Endothelial cell of umbilical vein (primary cell): ENCODE measurements at regions of chr10 and their contacts with region 1.

Region 1: GRCh38 chr10:31697271-31698180 is 231.1 kb downstream of the ARHGAP12 start:
- DNase-seq: peak; percentile 98
- H3K4me3 ChIP-seq: peak overlapping the region in 1 of 3 experiments; percentile 24
- H3K27ac ChIP-seq: peak overlapping the region; percentile 90
- H3K4me1 ChIP-seq: peaks cover 57% of the 10 kb centered on the region
- H3K27me3 ChIP-seq: no peaks in the 10 kb centered on the region
- CTCF ChIP-seq: no peak
- POLR2A ChIP-seq: peak; percentile 75

Region 2: DNA sequence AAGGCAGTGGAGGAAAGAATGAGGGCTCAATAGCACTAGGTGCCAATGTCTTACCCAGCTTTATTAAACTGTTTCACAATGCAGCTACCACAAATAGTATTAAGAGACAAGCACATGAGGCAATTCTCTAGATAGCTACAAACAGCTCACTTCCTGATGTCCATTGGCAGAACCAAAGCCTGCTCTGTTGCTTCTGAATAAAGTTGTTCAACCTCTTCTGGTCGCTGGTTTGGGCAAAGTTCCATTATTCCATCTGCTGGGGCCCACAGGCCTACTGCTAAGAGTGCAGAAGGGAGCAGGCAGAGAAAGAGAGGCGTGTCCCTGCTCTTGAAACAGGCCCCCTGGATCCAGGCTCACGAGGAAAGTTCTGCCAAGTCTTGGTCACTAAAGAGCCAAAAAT is 839.7 kb before region 1 on chr10:
- CTCF ChIA-PET with region 1: no interaction called
- POLR2A ChIA-PET with region 1: no interaction called
- dilution Hi-C with region 1: no loop called
- intact Hi-C with region 1: loop called (anchors 2 kb)
- DNase-seq: peak; percentile 50
- H3K4me3 ChIP-seq: no peak overlapping the region
- H3K27ac ChIP-seq: peak overlapping the region; percentile 97
- H3K4me1 ChIP-seq: peaks cover 63% of the 10 kb centered on the region
- H3K27me3 ChIP-seq: no peaks in the 10 kb centered on the region
- CTCF ChIP-seq: no peak
- POLR2A ChIP-seq: no peak

Region 3: DNA sequence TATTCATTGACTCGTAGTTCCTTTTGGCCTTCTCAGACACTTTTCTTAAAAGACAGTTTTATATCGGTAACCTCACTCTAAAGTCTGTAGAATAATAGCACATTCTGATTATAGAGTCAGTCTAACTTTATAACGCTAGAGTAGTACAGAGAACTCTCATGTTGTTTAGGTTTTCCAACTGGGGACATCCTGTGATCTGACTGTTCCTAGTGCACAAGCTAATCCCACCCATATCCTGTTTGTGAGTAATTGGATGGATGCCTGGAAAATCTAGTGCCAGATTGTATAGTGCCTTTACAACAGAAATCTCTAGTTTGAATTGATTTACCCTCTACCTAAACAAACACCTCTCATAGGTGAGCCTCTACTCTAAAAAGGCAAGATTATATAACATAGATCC is 271.1 kb before region 1 on chr10:
- CTCF ChIA-PET with region 1: interaction called, 3 read pairs
- POLR2A ChIA-PET with region 1: no interaction called
- dilution Hi-C with region 1: no loop called
- intact Hi-C with region 1: loop called (anchors 2 kb)
- DNase-seq: peak; percentile 97
- H3K4me3 ChIP-seq: peak overlapping the region in 1 of 3 experiments; percentile 46
- H3K27ac ChIP-seq: peak overlapping the region; percentile 56
- H3K4me1 ChIP-seq: peaks cover 44% of the 10 kb centered on the region
- H3K27me3 ChIP-seq: no peaks in the 10 kb centered on the region
- CTCF ChIP-seq: no peak
- POLR2A ChIP-seq: peak; percentile 29

Region 4: DNA sequence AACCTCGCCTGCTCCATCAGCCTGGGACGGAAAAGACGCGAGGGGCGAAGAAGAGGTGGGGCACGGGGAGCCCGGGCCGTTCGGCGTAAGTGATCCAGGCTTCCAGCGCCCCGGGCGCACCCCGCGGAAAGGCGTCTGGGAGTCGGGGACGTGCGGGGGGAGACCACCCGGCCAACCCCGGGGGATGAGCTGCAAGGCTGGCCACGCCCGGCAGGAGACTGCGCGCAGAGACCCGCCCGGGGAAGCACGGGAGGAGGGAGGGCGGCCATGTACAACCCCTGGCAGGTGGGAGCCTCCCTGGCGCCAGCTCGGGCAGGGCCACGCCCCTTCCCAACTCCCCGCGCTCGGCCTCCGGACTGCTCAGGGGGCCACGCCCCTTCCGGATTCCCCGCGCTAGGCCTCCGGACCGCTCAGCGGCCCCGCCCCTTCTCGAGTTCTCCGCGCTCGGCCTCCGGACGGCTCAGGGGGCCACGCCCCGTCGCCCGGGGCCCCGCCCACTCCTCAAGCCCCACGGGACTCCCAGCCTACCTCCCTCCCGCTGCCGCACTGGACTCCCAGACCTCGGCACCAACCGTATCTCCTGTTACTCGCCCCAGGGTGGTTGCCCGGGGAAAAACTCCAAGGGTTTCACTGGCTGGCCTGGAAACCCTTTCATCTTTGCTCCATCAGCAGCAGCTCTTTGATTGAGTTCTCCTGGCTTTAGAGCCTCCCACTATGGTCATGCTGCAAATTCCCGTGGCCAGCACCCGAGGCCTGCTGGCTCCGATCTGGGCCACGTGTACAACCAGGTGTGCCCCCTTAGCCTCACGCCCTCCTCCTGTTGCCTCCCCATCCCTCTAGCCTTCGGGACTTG is 94.1 kb before region 1 on chr10:
- CTCF ChIA-PET with region 1: no interaction called
- POLR2A ChIA-PET with region 1: no interaction called
- dilution Hi-C with region 1: no loop called
- intact Hi-C with region 1: loop called (anchors 2 kb)
- DNase-seq: peak; percentile 92
- H3K4me3 ChIP-seq: peak overlapping the region; percentile 67 to 93 (median 79)
- H3K27ac ChIP-seq: peak overlapping the region; percentile 38
- H3K4me1 ChIP-seq: peaks cover 5% of the 10 kb centered on the region
- H3K27me3 ChIP-seq: peaks cover 8 to 13% of the 10 kb centered on the region in 2 experiments
- CTCF ChIP-seq: no peak
- POLR2A ChIP-seq: peak; percentile 41

Region 5: GRCh38 chr10:31721096-31721495 is 23.6 kb after region 1 on chr10:
- CTCF ChIA-PET with region 1: no interaction called
- POLR2A ChIA-PET with region 1: no interaction called
- dilution Hi-C with region 1: no loop called
- intact Hi-C with region 1: no loop called
- DNase-seq: no peak
- H3K4me3 ChIP-seq: no peak overlapping the region
- H3K27ac ChIP-seq: no peak overlapping the region
- H3K4me1 ChIP-seq: no peaks in the 10 kb centered on the region
- H3K27me3 ChIP-seq: no peaks in the 10 kb centered on the region
- CTCF ChIP-seq: no peak
- POLR2A ChIP-seq: no peak

Region 6: DNA sequence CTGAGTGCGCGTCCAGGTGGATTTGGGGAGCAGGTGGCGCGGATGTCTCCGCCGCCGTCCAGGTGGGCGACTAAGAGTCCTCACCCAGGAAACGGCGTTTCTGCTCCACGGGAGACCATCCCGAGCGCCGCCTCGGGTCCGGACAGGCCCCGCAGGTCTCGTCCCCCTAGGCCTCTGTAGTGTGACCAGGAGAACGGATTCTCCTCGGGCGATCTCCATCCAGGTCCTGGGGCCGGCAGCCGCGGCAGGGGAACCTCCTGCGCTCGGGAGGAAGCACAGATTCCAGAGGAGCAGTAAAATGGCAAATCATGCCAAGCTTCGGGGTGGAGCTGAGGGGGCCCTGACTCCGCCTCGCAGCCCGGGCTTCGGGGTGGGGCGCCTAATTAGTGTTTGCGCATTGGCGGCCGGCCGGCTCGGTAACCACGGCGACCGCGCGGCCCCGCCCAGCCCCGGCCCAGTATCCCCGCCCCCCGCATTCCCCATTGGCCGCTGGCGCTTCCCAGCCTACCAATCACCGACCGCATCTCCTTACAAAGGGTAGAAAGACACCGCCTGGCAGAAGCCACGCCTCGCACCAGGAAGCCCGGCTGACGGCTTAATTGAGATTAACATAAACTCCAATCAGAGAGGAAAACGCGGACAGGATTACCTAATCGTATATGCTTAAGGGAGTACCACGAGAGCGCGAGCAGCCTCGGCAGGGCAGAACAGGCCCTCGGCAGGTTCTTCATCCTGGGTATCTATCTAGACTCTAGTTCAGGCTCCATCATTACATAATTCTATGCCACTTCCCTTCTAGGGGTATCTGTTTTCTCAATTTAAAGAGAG is 62.5 kb after region 1 on chr10:
- CTCF ChIA-PET with region 1: interaction called, 4 read pairs
- POLR2A ChIA-PET with region 1: interaction called, 10 read pairs
- dilution Hi-C with region 1: no loop called
- intact Hi-C with region 1: loop called (anchors 1 kb)
- DNase-seq: peak; percentile 99
- H3K4me3 ChIP-seq: peak overlapping the region; percentile 57 to 77 (median 76)
- H3K27ac ChIP-seq: peak overlapping the region; percentile 94
- H3K4me1 ChIP-seq: peaks cover 11% of the 10 kb centered on the region
- H3K27me3 ChIP-seq: no peaks in the 10 kb centered on the region
- CTCF ChIP-seq: no peak
- POLR2A ChIP-seq: peak; percentile 83